Spleen (tissue), 13 donors: ENCODE measurements at regions of chr12 and their contacts with region 1.

Region 1: GRCh38 chr12:104201238-104202001 is 14.2 kb upstream of the TXNRD1 start:
- DNase-seq: no peak
- H3K4me3 ChIP-seq: no peak overlapping the region
- H3K27ac ChIP-seq: no peak overlapping the region
- H3K4me1 ChIP-seq: peaks cover 0 to 3% (median 0%) of the 10 kb centered on the region in 6 donors
- H3K27me3 ChIP-seq: peaks cover 0 to 8% (median 0%) of the 10 kb centered on the region in 7 donors
- CTCF ChIP-seq: peak; percentile 75 to 91 (median 86)
- POLR2A ChIP-seq: no peak

Region 2: GRCh38 chr12:104166465-104166864 is 35.0 kb before region 1 on chr12:
- intact Hi-C with region 1: no loop called
- DNase-seq: no peak
- H3K4me3 ChIP-seq: no peak overlapping the region
- H3K27ac ChIP-seq: peak overlapping the region in 1 of 8 donors; percentile 54
- H3K4me1 ChIP-seq: peaks cover 3 to 21% (median 7%) of the 10 kb centered on the region in 6 donors
- H3K27me3 ChIP-seq: peaks cover 0 to 34% (median 0%) of the 10 kb centered on the region in 7 donors
- CTCF ChIP-seq: no peak
- POLR2A ChIP-seq: no peak

Region 3: GRCh38 chr12:104358347-104359003 is 157.1 kb after region 1 on chr12:
- intact Hi-C with region 1: loop called (anchors 2 kb)
- DNase-seq: peak; percentile 84
- H3K4me3 ChIP-seq: no peak overlapping the region
- H3K27ac ChIP-seq: no peak overlapping the region
- H3K4me1 ChIP-seq: peaks cover 0 to 14% (median 0%) of the 10 kb centered on the region in 6 donors
- H3K27me3 ChIP-seq: no peaks in the 10 kb centered on the region
- CTCF ChIP-seq: peak; percentile 73 to 92 (median 88)
- POLR2A ChIP-seq: no peak

Region 4: GRCh38 chr12:104667139-104667538 is 465.7 kb after region 1 on chr12:
- intact Hi-C with region 1: no loop called
- DNase-seq: no peak
- H3K4me3 ChIP-seq: no peak overlapping the region
- H3K27ac ChIP-seq: peak overlapping the region in 2 of 8 donors; percentile 2 to 88
- H3K4me1 ChIP-seq: peaks cover 34 to 80% (median 44%) of the 10 kb centered on the region in 6 donors
- H3K27me3 ChIP-seq: no peaks in the 10 kb centered on the region
- CTCF ChIP-seq: no peak
- POLR2A ChIP-seq: no peak

Region 5: DNA sequence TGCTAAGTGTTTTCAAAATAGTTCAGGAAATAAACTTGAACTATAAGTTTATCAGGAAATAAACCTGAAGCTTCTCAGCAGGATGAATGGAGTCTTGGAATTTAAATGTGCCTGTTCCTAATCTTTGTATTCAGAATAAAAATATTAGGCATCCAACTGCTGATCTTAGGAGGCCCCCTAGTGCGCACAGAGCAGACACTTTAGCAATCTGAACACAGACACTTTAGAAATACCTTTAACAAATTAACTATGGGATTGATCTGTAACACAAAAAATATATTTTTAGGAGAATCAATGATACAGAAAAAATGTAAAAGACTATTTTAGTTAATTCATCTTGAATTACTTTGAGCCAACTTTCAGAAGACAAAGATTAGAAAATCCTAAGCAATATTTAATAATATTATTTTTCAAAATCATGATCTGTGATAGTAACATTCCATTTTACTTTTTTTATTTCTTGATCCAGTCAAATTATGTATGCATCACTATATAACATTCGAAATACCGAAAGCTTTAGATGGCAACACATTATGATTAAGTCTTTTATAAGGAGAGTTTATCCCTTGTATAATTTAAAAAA is 675.8 kb after region 1 on chr12:
- intact Hi-C with region 1: loop called (anchors 10 kb)
- DNase-seq: no peak
- H3K4me3 ChIP-seq: no peak overlapping the region
- H3K27ac ChIP-seq: no peak overlapping the region
- H3K4me1 ChIP-seq: no peaks in the 10 kb centered on the region
- H3K27me3 ChIP-seq: no peaks in the 10 kb centered on the region
- CTCF ChIP-seq: peak in 9 of 11 experiments; percentile 32 to 67 (median 60)
- POLR2A ChIP-seq: no peak

Region 6: DNA sequence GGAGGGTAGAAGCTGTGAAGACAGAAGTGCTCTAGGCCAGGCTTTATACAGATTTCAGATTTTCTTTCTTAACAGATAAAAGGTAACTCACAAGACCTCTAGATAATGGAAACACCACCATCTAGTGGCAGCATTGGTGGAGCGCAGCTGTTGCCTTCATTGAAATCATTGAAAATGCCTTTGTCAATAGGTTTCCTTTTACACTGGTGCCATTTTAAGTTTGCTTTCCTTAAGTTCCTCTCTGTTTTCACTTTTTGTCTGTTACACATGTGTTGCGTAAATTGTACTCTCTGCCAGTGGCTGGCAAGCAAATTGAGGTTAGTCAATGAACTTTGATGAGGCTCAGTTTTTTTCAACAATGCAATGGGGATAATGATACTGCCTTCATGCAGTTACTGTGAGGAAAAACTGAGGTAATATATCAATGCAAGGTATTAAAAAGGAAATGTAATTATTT is 851.7 kb after region 1 on chr12:
- intact Hi-C with region 1: loop called (anchors 5 kb)
- DNase-seq: peak; percentile 81
- H3K4me3 ChIP-seq: no peak overlapping the region
- H3K27ac ChIP-seq: no peak overlapping the region
- H3K4me1 ChIP-seq: peaks cover 0 to 10% (median 0%) of the 10 kb centered on the region in 6 donors
- H3K27me3 ChIP-seq: no peaks in the 10 kb centered on the region
- CTCF ChIP-seq: peak; percentile 84 to 97 (median 93)
- POLR2A ChIP-seq: no peak

Region 7: DNA sequence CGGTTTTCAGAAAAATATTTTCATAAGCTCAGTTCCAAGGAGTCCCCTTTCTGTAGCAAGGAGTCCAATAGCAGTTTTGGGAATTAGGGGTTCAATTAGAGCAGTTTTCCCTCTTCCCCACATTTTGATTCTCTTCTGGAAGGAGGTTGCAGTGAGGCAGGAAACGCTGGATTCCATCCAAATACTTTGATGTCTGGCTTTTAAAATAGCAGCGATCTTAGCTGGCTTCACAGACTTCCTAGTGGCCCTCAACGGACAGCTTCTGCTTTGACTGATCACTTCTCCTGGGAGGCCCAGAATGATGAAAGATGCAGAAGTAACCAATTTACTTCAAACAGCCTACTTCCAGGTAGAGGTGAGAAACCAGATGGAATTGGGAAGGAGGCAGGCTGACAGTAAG is 1192.2 kb after region 1 on chr12:
- intact Hi-C with region 1: loop called (anchors 10 kb)
- DNase-seq: no peak
- H3K4me3 ChIP-seq: no peak overlapping the region
- H3K27ac ChIP-seq: no peak overlapping the region
- H3K4me1 ChIP-seq: no peaks in the 10 kb centered on the region
- H3K27me3 ChIP-seq: no peaks in the 10 kb centered on the region
- CTCF ChIP-seq: no peak
- POLR2A ChIP-seq: no peak